ENCODE measurements at regions of chr1 and their contacts with region 1.

Region 1: DNA sequence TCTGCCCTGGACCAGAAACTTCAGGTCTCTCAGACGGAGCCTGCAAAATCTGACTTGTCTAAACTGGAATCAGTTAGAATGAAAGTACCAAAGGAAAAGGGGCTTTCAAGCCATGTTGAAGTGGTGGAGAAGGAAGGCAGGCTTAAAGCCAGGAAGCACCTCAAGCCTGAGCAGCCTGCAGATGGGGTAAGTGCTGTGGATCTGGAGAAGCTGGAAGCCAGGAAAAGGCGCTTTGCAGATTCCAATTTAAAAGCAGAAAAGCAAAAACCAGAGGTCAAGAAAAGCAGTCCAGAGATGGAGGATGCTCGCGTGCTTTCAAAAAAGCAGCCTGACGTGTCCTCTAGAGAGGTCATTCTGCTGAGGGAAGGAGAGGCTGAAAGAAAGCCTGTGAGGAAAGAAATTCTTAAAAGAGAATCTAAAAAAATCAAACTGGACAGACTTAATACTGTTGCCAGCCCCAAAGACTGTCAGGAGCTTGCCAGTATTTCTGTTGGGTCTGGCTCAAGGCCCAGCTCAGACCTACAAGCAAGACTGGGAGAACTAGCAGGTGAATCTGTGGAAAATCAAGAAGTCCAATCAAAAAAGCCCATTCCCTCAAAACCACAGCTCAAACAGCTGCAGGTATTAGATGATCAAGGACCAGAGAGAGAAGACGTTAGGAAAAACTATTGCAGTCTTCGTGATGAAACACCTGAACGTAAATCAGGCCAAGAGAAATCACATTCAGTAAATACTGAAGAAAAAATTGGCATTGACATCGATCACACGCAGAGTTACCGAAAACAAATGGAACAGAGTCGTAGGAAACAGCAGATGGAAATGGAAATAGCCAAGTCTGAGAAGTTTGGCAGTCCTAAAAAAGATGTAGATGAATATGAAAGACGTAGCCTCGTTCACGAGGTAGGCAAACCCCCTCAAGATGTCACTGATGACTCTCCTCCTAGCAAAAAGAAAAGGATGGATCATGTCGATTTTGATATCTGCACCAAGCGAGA is 46.6 kb downstream of the ZBTB17 start:
- DNase-seq: no peak
- ATAC-seq: no peak
- H3K4me3 ChIP-seq: no peak overlapping the region
- H3K27ac ChIP-seq: no peak overlapping the region
- H3K4me1 ChIP-seq: peaks cover 6% of the 10 kb centered on the region; the same call in 1 of the 2 replicates
- H3K27me3 ChIP-seq: no peaks in the 10 kb centered on the region
- CTCF ChIP-seq: no peak
- POLR2A ChIP-seq: no peak
- RAD21 ChIP-seq: no peak

Region 2: DNA sequence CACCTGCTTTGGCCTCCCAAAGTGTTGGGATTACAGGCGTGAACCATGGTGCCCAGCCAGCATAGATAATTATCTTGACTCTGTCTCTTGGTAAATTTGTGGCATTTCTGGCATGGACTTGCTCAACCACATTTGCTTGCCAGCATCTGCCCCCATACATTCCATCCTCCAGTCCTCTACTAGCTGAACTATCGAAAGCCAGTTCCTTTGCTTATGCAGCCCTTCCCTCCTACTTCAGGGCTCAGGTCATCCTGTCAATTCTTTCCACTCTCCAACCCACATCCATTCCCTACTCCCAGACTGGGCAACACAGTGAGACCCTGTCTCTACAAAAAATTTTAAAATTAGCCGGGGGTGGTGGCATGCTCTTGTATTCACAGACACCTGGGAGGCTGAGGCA is 108.8 kb before region 1 on chr1:
- CTCF ChIA-PET with region 1: no interaction called
- POLR2A ChIA-PET with region 1: no interaction called
- dilution Hi-C with region 1: no loop called
- in situ Hi-C with region 1: no loop called
- intact Hi-C with region 1: loop called (anchors 5 kb)
- DNase-seq: peak; percentile 44
- ATAC-seq: peak; percentile 72
- H3K4me3 ChIP-seq: no peak overlapping the region
- H3K27ac ChIP-seq: no peak overlapping the region
- H3K4me1 ChIP-seq: no peaks in the 10 kb centered on the region
- H3K27me3 ChIP-seq: no peaks in the 10 kb centered on the region
- CTCF ChIP-seq: no peak
- POLR2A ChIP-seq: no peak
- RAD21 ChIP-seq: no peak

Region 3: GRCh38 chr1:15941899-15942660 is 12.8 kb after region 1 on chr1:
- CTCF ChIA-PET with region 1: no interaction called
- POLR2A ChIA-PET with region 1: no interaction called
- dilution Hi-C with region 1: no loop called
- in situ Hi-C with region 1: no loop called
- intact Hi-C with region 1: no loop called
- DNase-seq: no peak
- ATAC-seq: no peak
- H3K4me3 ChIP-seq: no peak overlapping the region
- H3K27ac ChIP-seq: no peak overlapping the region
- H3K4me1 ChIP-seq: peaks cover 14% of the 10 kb centered on the region
- H3K27me3 ChIP-seq: no peaks in the 10 kb centered on the region
- CTCF ChIP-seq: no peak
- POLR2A ChIP-seq: no peak
- RAD21 ChIP-seq: no peak

Measured in IMR-90 (cell line).